Sciatic nerve (tissue), 2 donors: ENCODE measurements at regions of chr21 and their contacts with region 1.

Region 1: DNA sequence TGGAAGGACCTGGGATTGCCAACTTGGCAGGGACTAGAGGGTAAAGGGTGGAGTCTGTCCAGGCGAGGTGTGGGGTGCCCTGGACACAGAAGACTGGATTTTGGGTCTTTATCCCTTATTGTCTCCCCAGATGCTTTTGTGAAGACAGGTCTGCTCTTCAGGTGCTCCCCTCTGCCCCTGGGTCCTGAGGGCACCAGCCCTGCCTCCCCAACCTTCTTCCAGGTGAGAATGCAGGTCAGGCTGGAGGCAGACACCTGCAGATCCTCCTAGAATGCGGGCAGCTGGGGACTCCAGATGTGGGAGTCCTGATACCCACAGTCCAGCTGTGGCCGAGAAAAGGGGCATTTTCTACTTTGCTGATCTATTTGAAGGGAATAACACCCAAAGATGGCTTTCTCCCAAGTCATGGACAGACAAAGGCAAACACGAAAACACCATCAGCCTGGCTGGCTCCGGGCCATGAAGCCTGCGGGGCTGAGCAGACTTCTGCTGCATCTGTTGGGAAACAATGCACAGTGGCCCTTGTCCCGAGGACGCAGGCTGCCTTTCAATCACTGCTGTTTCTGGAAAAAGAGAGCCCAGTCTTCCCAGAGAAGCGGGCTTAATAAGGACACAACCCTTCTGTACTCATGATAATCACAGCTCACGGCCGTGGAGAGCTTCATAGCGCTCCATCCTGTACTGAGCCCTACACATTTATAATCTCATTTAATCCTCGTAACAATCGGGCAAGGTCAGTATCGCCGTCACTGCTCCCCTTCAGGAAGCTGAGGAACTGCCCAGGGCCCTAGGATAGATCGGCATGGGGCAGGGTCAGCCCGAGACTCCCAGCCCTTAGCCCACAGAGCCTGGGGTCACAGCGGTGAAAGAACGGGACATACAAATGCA is 62.0 kb upstream of the ABCG1 start:
- DNase-seq: peak; percentile 57
- ATAC-seq: peak; percentile 45

Region 2: GRCh38 chr21:42258153-42258884 is 101.4 kb after region 1 on chr21:
- intact Hi-C with region 1: loop called (anchors 10 kb)
- DNase-seq: peak; percentile 78
- ATAC-seq: peak; percentile 64

Region 3: GRCh38 chr21:42454786-42455580 is 298.0 kb after region 1 on chr21:
- intact Hi-C with region 1: no loop called
- DNase-seq: no peak
- ATAC-seq: peak; percentile 45

Region 4: GRCh38 chr21:42553435-42553834 is 396.5 kb after region 1 on chr21:
- intact Hi-C with region 1: no loop called
- DNase-seq: no peak
- ATAC-seq: peak; percentile 80